GM18951 (cell line): ENCODE measurements at regions of chr9 and their contacts with region 1.

Region 1: DNA sequence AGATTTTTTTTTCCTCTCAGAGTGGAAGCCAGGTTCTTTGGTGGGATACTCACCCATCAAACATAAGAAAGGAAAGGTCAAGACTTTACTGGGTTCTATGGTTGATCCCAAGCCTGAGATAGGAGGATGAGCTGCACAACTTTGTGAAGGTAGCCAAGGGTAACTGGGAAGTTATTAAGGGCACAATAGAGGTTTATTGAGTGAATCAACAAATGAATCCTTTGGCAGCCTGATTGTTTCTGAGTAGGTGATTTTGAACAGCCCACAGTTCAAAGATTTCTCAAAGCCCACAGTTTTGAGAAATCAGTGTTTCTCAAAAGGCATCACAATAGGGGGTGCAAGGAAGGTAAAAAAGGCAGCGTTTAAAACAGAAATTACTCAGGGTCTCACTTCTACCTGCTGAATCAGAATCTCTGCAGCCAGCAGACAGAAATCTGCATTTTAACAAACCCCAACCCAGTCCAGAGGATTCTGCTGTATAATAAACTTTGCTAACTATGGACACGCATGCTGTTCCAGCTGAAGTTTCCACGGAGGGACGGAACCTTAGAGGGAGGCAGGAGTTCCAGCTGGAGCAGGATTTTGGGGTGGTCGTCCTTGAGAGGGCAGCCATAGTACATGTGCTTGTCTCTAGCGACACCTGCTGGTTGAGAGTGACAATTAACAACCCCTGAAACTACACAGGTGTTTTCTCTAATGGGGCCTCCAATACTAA is 32.7 kb upstream of the FSD1L start:
- POLR2A ChIP-seq: no peak

Region 2: DNA sequence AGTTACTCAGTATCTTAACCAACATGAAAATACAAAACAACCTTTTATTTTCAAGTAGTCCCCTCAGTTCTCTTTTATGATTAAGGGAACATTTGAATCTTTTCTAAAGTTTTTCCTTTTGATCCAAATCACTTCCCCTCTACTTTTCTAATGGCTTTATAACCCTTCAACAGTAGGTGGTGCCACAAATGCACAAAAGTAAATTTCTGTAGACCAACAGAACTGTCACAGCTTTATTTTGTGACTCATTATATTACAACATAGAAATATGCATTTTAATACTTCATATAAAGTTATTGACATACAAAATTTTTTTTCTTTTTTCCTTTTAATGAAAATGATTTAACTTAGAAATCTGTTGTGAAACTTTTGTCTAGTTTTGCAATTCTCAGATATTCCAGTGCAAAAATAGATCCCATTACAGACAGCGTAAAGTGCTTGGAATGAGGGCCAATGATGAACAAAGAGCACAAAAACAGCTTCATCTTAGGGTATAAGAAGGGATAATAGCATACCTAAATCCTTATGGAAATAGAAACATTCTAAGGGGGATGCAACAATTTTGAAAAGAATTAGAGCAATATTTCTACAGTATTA is 634.2 kb before region 1 on chr9:
- in situ Hi-C with region 1: loop called (anchors 25 kb)
- POLR2A ChIP-seq: no peak

Region 3: DNA sequence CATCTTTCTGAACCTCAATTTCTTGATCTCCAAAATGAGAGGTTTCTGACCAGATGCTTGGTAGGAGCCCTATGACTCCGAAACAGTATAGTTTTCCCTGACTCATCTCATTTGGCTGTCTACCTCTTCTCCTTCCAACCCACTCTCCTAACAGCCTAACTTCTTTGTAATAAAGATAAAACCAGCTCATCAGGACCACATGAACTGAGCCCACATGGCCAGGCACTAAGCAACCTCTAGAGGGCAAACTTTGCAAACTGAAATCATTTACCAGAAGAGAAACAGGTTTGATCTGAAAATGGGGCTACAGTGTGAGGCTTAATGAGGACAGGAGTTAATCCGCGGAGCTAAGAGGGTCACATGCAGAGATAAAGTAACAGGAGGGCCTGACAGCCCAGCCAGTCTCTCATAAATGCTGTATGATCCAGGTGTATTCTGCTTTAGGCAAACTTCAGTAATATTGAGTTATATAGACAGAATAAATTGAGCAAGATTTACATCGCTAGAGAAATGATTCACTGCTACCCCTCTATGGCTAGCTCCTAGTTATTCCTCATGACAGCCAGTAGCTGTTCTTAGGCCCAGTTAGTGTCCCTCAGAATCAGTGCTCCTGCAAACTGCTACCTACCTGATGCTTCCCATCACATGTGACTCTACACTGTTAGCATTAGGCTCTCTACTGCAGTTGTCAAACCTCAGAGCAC is 551.8 kb before region 1 on chr9:
- in situ Hi-C with region 1: loop called (anchors 10 kb)
- POLR2A ChIP-seq: no peak

Region 4: GRCh38 chr9:105026451-105026850 is 388.7 kb before region 1 on chr9:
- in situ Hi-C with region 1: no loop called
- POLR2A ChIP-seq: no peak

Region 5: GRCh38 chr9:105157130-105157583 is 257.9 kb before region 1 on chr9:
- in situ Hi-C with region 1: loop called (anchors 10 kb)
- POLR2A ChIP-seq: no peak